MCF 10A (cell line): ENCODE measurements at regions of chr20 and their contacts with region 1.

Region 1: DNA sequence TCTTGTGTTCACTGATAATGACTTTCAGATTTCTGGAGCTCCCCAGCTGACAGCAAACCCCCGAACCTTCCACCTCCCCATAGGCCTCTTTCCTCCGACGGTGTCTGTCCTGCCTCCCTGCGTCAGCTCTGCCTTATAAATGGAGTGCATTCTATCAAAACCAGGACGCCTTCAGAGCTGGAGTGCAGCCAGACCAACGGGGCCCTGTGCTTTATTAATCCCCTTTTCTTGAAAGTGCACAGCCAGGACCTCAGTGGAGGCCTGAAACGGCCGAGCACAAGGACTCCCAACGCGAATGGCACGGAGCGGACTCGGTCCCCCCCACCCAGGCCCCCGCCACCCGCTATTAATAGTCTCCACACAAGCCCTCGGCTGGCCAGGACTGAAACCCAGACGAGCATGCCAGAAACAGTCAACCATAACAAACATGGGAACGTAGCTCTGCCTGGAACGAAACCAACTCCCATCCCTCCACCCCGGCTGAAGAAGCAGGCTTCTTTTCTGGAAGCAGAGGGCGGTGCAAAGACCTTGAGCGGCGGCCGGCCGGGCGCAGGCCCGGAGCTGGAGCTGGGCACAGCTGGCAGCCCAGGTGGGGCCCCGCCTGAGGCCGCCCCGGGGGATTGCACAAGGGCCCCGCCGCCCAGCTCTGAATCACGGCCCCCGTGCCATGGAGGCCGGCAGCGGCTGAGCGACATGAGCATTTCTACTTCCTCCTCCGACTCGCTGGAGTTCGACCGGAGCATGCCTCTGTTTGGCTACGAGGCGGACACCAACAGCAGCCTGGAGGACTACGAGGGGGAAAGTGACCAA is 42.3 kb upstream of the NAA20 start:
- DNase-seq: peak; percentile 95
- H3K4me3 Mint-ChIP-seq: peak overlapping the region; percentile 80
- H3K27ac Mint-ChIP-seq: peak overlapping the region; percentile 83
- H3K4me1 Mint-ChIP-seq: peaks cover 36% of the 10 kb centered on the region
- H3K27me3 Mint-ChIP-seq: no peaks in the 10 kb centered on the region
- CTCF ChIP-seq: no peak

Region 2: GRCh38 chr20:18507218-18508021 is 1467.4 kb before region 1 on chr20 and contains the start of gene SEC23B:
- CTCF ChIA-PET with region 1: no interaction called
- POLR2A ChIA-PET with region 1: interaction called, 13 read pairs
- intact Hi-C with region 1: no loop called
- DNase-seq: peak; percentile 98
- H3K4me3 Mint-ChIP-seq: peak within 1 kb of the TSS; percentile 100
- H3K27ac Mint-ChIP-seq: peak within 1 kb of the TSS; percentile 100
- H3K4me1 Mint-ChIP-seq: peaks cover 14% of the 10 kb centered on the region
- H3K27me3 Mint-ChIP-seq: no peaks in the 10 kb centered on the region
- CTCF ChIP-seq: no peak
- total RNA-seq, gene SEC23B: 139 TPM in 2 replicates

Region 3: DNA sequence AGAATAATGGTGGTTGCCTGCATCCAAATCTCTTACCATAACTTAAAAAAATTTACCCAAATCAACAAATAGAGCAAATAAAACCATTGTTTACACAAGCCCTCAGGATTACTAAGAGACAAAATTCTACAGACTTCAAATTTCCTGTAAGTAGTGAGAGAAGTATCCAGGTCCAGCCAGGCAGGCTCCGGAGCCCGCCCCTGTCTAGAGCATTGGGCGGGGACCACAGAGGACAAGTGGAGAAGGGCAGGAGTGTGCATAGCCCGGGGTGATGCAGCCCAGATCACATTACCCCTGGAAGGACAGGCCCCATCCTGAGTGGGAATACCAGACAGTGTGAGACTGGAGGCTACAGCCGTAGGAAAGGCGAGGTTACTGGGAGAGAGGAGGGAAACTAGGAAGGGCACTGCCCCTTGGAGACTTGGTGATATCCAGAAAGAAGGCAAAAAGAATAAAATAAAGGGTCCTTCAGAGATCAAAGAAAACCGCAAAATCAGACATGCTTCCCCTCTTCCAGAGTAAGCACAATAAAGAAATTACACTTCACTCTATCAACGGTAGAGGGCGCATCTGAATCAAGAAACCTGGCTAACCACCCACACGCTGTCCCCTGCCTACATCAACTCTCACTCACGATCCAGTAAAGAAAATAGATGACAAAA is 190.2 kb before region 1 on chr20:
- CTCF ChIA-PET with region 1: interaction called, 82 read pairs
- POLR2A ChIA-PET with region 1: interaction called, 154 read pairs
- intact Hi-C with region 1: loop called (anchors 1 kb)
- DNase-seq: peak; percentile 89
- H3K4me3 Mint-ChIP-seq: peak overlapping the region; percentile 51
- H3K27ac Mint-ChIP-seq: peak overlapping the region; percentile 86
- H3K4me1 Mint-ChIP-seq: peaks cover 60% of the 10 kb centered on the region
- H3K27me3 Mint-ChIP-seq: no peaks in the 10 kb centered on the region
- CTCF ChIP-seq: peak; percentile 68

Region 4: GRCh38 chr20:19880256-19881079 is 94.4 kb before region 1 on chr20:
- CTCF ChIA-PET with region 1: interaction called, 58 read pairs
- POLR2A ChIA-PET with region 1: interaction called, 201 read pairs
- intact Hi-C with region 1: loop called (anchors 2 kb)
- DNase-seq: peak; percentile 52
- H3K4me3 Mint-ChIP-seq: peak overlapping the region; percentile 35
- H3K27ac Mint-ChIP-seq: peak overlapping the region; percentile 90
- H3K4me1 Mint-ChIP-seq: peaks cover 17% of the 10 kb centered on the region
- H3K27me3 Mint-ChIP-seq: no peaks in the 10 kb centered on the region
- CTCF ChIP-seq: no peak

Region 5: DNA sequence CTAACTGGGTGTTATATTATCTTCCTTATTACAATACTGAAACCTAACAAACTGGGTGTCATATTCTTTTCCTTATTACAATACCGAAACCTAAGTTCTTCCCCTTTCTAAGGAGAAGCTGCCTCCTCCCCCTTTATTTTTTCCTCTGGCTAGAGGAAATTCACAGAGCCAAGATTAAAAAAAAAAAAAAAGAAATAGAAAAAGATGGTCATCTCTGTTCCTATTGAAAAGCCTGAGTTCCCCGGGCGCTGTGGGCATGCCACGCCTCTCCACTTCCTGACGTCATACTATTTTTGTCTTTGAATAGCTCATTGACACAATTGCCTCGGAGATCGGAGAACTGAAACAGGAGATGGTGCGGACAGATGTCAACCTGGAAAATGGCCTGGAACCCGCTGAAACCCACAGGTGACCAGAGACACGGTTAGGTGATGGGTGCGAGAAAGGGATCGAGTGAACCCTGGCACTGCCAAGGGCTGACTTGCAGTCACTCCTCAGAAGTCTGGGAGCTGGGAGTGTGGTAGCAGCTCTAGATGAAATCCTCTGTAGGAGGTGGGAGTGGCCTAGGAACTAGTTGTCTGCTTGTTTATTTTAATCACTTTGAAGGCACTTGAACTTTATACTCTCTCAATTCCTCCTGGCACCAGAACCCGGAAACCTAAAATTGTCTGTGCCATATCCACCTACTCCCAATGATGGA is 39.9 kb before region 1 on chr20:
- CTCF ChIA-PET with region 1: interaction called, 26 read pairs
- POLR2A ChIA-PET with region 1: interaction called, 177 read pairs
- intact Hi-C with region 1: no loop called
- DNase-seq: peak; percentile 70
- H3K4me3 Mint-ChIP-seq: peak overlapping the region; percentile 69
- H3K27ac Mint-ChIP-seq: peak overlapping the region; percentile 71
- H3K4me1 Mint-ChIP-seq: peaks cover 15% of the 10 kb centered on the region
- H3K27me3 Mint-ChIP-seq: no peaks in the 10 kb centered on the region
- CTCF ChIP-seq: no peak

Region 6: DNA sequence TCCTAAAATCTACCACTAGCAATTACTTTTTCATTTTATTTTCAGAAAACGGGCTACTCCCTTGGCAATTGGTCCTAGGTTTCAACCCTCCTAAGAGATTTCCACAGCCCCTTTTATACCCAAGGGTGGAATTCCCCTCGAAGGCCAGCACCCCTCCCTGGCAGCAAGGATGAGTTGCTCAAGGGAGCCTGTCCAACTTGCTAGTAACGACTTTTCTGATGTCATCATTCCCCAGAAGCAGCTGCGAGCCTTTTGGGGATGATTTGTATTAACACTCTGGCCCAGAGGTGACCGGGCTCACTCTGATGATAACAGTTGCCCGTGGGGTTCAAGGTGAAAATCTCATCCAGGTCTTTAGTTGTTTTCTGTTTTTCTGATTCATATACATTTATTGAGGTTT is 11.6 kb after region 1 on chr20:
- CTCF ChIA-PET with region 1: interaction called, 258 read pairs
- POLR2A ChIA-PET with region 1: interaction called, 525 read pairs
- intact Hi-C with region 1: no loop called
- DNase-seq: peak; percentile 58
- H3K4me3 Mint-ChIP-seq: no peak overlapping the region
- H3K27ac Mint-ChIP-seq: peak overlapping the region; percentile 84
- H3K4me1 Mint-ChIP-seq: peaks cover 35% of the 10 kb centered on the region
- H3K27me3 Mint-ChIP-seq: no peaks in the 10 kb centered on the region
- CTCF ChIP-seq: no peak